CD14-positive monocyte (primary cell): ENCODE measurements at regions of chr6 and their contacts with region 1.

Region 1: DNA sequence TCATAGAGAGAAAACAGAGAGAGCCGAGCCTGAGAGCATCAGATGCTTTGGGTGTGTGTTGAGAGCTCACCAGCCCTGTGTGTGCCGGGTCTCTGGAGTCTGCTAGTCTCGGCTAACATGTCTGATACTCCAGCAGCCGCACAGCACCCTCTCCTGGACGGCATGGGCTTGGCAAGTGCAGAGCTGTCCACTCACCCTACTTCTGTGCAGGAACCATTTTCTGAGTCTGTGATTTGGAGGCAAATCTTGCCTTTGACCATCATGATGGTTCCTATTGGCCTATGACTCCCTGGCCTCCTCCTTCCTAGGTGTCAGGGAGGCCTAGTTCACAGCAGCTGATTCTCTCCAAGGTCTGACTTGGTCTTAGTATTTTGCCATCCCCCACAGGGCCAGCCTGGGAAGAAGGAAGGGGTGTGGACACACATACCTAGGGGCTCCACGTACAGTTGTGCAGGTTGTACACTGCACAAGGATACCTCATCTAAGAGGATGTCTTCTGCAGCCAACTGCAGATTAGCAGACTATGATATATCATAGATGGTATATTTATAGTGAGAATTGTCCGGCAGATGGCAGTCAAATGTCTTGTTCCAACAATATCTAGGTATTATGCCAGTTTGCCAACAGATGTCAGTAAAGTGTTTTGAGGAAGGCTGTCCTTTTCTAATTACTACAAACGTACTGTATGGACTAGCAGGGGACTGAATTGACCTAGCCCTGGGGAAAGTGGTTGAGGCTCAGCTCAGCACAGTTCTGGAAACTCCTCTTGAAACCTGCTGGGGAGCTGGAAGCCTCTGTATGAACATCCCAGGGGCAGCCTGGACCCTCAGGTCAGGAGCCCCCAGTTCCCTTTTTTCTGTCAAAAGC is 13.0 kb downstream of the FGD2 start:
- DNase-seq: peak; percentile 78 to 81 (median 78)
- H3K4me3 ChIP-seq: no peak overlapping the region
- H3K4me3 Mint-ChIP-seq: peak overlapping the region; percentile 19 to 24
- H3K27ac ChIP-seq: peak overlapping the region in 1 of 2 donors; percentile 59
- H3K27ac Mint-ChIP-seq: peak overlapping the region; percentile 51 to 82 (median 76)
- H3K4me1 ChIP-seq: peaks cover 7 to 21% of the 10 kb centered on the region in 2 donors
- H3K4me1 Mint-ChIP-seq: peaks cover 20% of the 10 kb centered on the region
- H3K27me3 ChIP-seq: no peaks in the 10 kb centered on the region
- H3K27me3 Mint-ChIP-seq: no peaks in the 10 kb centered on the region
- CTCF ChIP-seq: peak; percentile 96

Region 2: GRCh38 chr6:36615018-36615761 is 403.2 kb before region 1 on chr6:
- intact Hi-C with region 1: loop called in 1 of 2 experiments (anchors 10 kb)
- DNase-seq: peak; percentile 79 to 82 (median 82)
- H3K4me3 ChIP-seq: no peak overlapping the region
- H3K4me3 Mint-ChIP-seq: no peak overlapping the region
- H3K27ac ChIP-seq: no peak overlapping the region
- H3K27ac Mint-ChIP-seq: peak overlapping the region; percentile 28 to 83 (median 71)
- H3K4me1 ChIP-seq: peaks cover 24 to 38% of the 10 kb centered on the region in 2 donors
- H3K4me1 Mint-ChIP-seq: peaks cover 33% of the 10 kb centered on the region
- H3K27me3 ChIP-seq: no peaks in the 10 kb centered on the region
- H3K27me3 Mint-ChIP-seq: no peaks in the 10 kb centered on the region
- CTCF ChIP-seq: peak; percentile 84

Region 3: DNA sequence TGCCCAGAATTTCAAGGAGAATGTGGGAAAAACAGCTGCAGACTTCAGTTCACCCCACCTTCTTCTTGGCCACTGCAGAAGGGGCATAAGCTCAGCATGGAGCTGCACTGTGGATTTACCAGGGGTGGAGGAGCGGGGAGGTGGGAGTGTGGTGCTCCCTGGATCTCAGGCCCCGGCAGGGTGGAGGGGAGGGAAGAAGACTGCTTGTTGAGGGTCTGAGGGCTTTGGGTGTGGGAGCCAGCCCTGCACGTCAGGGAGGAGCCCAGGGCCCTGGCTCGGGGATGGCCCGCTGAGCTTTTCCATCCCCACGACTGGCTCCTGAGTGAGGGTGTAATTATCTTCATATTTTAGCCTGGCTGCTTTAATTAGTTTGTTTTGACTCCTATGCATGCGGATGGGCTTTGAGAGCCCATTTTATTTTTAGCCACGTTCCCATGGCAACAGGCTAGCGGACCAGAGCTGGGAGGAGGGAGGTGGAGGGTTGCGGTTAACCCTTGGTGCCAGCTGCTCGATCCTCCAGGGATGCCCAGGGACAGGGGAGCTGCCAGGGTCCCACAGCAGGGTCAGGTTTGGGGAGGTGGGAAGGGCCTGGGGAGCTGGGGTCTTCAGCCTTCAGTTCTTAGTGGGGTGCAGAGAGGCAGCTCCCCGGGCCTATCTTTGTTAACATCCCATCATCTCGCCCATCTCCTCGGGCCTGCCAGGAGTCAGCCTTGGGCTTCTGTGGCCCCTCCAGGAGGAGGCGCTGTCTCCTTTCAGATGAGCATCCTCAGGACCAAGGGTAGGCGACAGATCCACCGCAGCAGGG is 252.6 kb before region 1 on chr6:
- intact Hi-C with region 1: loop called (anchors 2 to 5 kb)
- DNase-seq: peak; percentile 78 to 82 (median 79)
- H3K4me3 ChIP-seq: no peak overlapping the region
- H3K4me3 Mint-ChIP-seq: no peak overlapping the region
- H3K27ac ChIP-seq: no peak overlapping the region
- H3K27ac Mint-ChIP-seq: no peak overlapping the region
- H3K4me1 ChIP-seq: peaks cover 19 to 27% of the 10 kb centered on the region in 2 donors
- H3K4me1 Mint-ChIP-seq: peaks cover 26% of the 10 kb centered on the region
- H3K27me3 ChIP-seq: no peaks in the 10 kb centered on the region
- H3K27me3 Mint-ChIP-seq: peaks cover 0 to 7% (median 2%) of the 10 kb centered on the region in 3 donors
- CTCF ChIP-seq: peak; percentile 95

Region 4: DNA sequence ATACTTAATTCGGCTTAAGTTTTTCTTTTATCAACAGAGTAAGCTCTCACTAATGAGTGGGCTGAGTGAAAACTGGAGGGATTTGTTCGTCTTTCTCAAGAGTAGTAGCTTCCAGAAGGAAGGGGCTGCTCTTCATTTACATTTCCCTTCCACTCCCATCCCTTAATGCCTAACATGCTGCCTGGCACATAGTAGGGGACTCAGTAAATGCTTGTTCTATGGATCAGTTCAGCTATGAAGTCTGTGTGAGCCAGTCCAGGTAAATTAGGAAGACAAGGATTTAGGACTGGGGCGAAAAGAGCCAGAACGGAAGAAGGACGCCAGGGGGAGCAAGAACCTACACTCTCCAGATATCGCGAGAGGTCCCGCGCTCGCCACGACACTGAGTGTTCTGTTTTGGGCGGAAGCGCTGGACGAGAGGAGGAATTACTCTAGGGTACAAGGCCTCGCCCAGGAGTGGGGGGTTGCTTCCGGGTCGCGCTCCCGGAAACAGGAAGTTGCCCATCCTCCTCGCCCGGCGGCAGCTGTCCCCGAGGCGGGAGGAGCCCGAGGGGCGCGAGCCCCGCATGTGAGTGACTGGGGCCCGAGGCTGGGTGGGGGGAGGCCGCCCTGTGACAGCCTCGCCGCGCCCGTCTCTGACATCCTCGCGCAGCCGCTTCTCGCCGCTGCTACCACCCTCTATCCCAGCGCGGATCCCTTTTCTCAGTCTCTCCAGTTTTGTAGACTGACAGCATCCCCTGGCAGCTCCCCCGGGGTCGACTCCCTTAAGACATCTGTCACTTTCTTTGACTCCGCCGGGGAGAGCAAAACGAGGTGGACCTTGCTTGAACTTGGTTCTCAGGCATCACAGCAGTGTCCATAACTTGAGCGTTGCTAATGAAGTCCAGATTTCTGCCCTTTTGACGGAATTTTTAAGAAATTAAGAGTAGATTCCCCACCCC is 132.7 kb before region 1 on chr6 and contains the start of gene C6orf89:
- intact Hi-C with region 1: loop called (anchors 2 kb)
- DNase-seq: peak; percentile 98 to 99 (median 99)
- H3K4me3 ChIP-seq: peak within 1 kb of the TSS; percentile 85 to 94 (median 87)
- H3K4me3 Mint-ChIP-seq: peak within 1 kb of the TSS; percentile 89 to 93
- H3K27ac ChIP-seq: peak within 1 kb of the TSS; percentile 53 to 91
- H3K27ac Mint-ChIP-seq: peak within 1 kb of the TSS; percentile 85 to 97 (median 92)
- H3K4me1 ChIP-seq: peaks cover 15 to 17% of the 10 kb centered on the region in 2 donors
- H3K4me1 Mint-ChIP-seq: peaks cover 25% of the 10 kb centered on the region
- H3K27me3 ChIP-seq: no peaks in the 10 kb centered on the region
- H3K27me3 Mint-ChIP-seq: no peaks in the 10 kb centered on the region
- CTCF ChIP-seq: peak; percentile 84
- polyA plus RNA-seq, gene C6orf89: 19.2 to 37.5 (median 29.2) TPM

Region 5: DNA sequence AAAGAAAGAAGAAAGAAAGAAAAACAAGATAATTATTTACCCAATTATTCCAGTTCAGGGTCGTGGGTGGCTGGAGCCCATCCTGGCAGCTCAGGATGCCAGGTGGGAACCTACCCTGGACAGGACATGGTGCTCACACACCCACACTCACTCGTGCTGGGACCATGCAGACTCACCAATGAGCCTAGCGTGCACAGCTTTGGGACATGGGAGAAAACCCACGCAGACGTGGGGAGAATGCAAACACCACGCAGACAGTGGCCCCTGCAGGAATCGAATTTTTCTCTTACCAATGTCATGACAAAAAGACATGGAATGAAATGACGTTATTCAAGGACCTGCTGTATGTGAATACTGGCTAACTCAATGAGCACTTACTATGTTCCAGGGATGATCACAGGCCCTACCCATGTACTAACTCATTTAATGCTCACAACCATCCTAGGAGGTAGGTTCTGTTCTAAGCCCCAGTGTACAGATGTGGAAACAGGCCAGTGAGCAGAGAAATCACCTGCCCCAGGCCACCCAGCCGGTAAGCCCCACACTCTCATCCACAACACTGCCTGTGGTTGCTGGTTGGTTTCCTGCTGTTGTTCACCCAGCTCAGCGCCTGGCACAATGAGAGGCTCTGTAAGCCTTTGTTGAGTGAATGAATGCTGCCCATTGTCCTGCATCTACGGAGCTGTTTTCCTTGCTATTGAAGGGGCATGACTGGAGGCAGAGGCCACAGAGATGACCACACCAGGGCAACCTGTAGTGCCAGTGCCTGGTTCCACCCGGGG is 70.7 kb before region 1 on chr6:
- intact Hi-C with region 1: no loop called
- DNase-seq: no peak
- H3K4me3 ChIP-seq: no peak overlapping the region
- H3K4me3 Mint-ChIP-seq: no peak overlapping the region
- H3K27ac ChIP-seq: no peak overlapping the region
- H3K27ac Mint-ChIP-seq: no peak overlapping the region
- H3K4me1 ChIP-seq: no peaks in the 10 kb centered on the region
- H3K4me1 Mint-ChIP-seq: no peaks in the 10 kb centered on the region
- H3K27me3 ChIP-seq: peaks cover 0 to 11% of the 10 kb centered on the region in 2 donors
- H3K27me3 Mint-ChIP-seq: peaks cover 15 to 36% (median 22%) of the 10 kb centered on the region in 3 donors
- CTCF ChIP-seq: no peak

Region 6: GRCh38 chr6:36962874-36963273 is 55.6 kb before region 1 on chr6:
- intact Hi-C with region 1: loop called in 1 of 2 experiments (anchors 10 kb)
- DNase-seq: peak; percentile 97 to 99 (median 98)
- H3K4me3 ChIP-seq: no peak overlapping the region
- H3K4me3 Mint-ChIP-seq: peak overlapping the region; percentile 21 to 59
- H3K27ac ChIP-seq: peak overlapping the region in 1 of 2 donors; percentile 51
- H3K27ac Mint-ChIP-seq: peak overlapping the region; percentile 43 to 94 (median 90)
- H3K4me1 ChIP-seq: peaks cover 10 to 16% of the 10 kb centered on the region in 2 donors
- H3K4me1 Mint-ChIP-seq: peaks cover 22% of the 10 kb centered on the region
- H3K27me3 ChIP-seq: peaks cover 0 to 9% of the 10 kb centered on the region in 2 donors
- H3K27me3 Mint-ChIP-seq: peaks cover 19 to 20% (median 19%) of the 10 kb centered on the region in 3 donors
- CTCF ChIP-seq: no peak

Region 7: DNA sequence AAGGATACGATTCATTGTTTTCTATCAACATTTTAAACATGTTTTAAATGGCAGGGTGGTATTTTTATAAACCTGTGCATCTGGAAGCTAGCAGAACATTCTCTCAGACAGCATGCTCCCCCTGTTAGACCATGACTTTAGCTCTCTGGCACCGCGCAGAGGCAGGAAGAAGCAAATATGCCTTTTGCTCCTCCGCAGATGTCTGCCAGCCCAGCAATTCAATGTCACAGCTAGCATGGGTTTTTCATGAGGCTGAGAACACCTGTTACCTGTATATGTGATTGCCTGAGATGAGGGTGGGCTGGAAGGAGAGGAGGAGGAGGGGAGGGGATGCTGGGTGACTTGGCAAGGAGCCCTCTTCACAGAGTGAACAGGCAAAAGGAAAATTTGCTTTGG is 39.1 kb before region 1 on chr6:
- intact Hi-C with region 1: loop called (anchors 5 kb)
- DNase-seq: no peak
- H3K4me3 ChIP-seq: no peak overlapping the region
- H3K4me3 Mint-ChIP-seq: no peak overlapping the region
- H3K27ac ChIP-seq: peak overlapping the region in 1 of 2 donors; percentile 15
- H3K27ac Mint-ChIP-seq: peak overlapping the region in 2 of 7 donors; percentile 19 to 67
- H3K4me1 ChIP-seq: peaks cover 18 to 19% of the 10 kb centered on the region in 2 donors
- H3K4me1 Mint-ChIP-seq: peaks cover 6% of the 10 kb centered on the region
- H3K27me3 ChIP-seq: no peaks in the 10 kb centered on the region
- H3K27me3 Mint-ChIP-seq: no peaks in the 10 kb centered on the region
- CTCF ChIP-seq: no peak

Region 8: DNA sequence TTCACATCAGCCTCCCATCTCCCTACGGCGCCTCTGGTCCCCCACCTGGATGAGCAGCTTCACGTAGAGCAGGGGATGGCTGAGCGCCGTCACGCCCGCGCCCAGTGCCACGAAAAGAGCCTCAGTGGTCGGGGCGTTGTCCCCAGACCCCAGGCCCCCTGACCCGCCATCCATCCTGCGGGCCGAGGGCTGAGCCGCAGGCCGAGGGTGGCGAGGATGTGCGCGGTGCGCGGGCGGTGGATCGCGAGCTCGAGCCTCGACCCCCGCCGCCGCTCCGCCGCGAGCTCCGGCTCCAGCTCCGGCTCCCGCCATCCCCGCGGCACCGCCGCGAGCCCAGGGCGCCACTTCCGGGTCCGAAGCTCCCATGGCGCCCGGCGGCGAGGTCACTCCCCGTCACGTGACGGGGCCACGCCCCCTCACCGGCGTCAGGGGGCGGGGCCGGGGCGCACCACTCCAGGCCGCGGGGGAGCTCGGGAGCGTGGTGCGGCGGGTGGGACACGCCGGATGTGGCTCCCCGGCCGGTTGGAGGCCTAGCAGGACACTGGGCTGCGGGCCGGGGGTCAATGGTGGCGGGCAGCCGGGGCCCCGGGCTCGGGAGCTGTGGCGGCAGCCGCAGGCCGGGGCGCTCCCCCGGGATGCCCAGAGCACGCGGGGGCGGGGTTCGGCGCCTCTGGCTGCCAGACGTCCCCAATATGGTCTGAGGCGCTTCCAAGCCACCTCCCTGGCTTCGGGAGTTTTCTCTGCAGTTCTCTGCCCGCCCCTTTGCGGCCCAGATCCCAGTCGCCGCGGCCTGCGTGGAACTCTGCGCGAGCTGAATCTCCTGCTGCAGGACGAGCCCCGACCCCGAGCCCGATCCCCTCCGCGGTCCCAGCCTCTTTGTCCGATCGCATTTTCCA is 32.4 kb before region 1 on chr6 and contains the start of gene MTCH1:
- intact Hi-C with region 1: loop called in 1 of 2 experiments (anchors 5 kb)
- DNase-seq: peak; percentile 83 to 90 (median 88)
- H3K4me3 ChIP-seq: peak within 1 kb of the TSS; percentile 90 to 98 (median 94)
- H3K4me3 Mint-ChIP-seq: peak within 1 kb of the TSS; percentile 91 to 97
- H3K27ac ChIP-seq: peak within 1 kb of the TSS; percentile 50 to 95
- H3K27ac Mint-ChIP-seq: peak within 1 kb of the TSS; percentile 79 to 96 (median 92)
- H3K4me1 ChIP-seq: peaks cover 40 to 44% of the 10 kb centered on the region in 2 donors
- H3K4me1 Mint-ChIP-seq: peaks cover 14% of the 10 kb centered on the region
- H3K27me3 ChIP-seq: no peaks in the 10 kb centered on the region
- H3K27me3 Mint-ChIP-seq: peaks cover 0 to 7% (median 5%) of the 10 kb centered on the region in 3 donors
- CTCF ChIP-seq: no peak
- polyA plus RNA-seq, gene MTCH1: 111 to 118 (median 111) TPM